Heart right ventricle (tissue), 16 donors: ENCODE measurements at regions of chr13 and their contacts with region 1.

Region 1: DNA sequence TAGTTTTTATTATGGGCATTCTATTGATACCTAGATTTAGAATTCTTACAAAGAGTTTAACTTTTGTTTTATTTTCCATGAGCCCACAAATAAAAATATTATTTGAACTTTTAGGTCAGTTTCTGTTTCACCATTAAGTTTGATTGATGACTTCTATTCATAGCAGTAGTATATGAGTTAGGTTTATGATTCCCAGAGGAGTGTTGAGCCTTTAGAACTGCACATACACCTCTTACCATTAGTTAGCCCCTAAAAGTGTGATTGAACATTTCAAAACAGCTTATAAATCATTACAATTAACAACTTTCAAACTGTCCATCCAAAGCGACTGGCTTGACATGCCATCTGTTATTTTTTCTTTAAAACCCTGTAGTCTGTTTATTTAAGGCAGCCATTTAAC is 19.0 kb upstream of the PCDH17 start:
- DNase-seq: no peak
- ATAC-seq: no peak
- H3K4me3 ChIP-seq: no peak overlapping the region
- H3K27ac ChIP-seq: no peak overlapping the region
- H3K4me1 ChIP-seq: no peaks in the 10 kb centered on the region
- H3K27me3 ChIP-seq: no peaks in the 10 kb centered on the region
- CTCF ChIP-seq: no peak

Region 2: DNA sequence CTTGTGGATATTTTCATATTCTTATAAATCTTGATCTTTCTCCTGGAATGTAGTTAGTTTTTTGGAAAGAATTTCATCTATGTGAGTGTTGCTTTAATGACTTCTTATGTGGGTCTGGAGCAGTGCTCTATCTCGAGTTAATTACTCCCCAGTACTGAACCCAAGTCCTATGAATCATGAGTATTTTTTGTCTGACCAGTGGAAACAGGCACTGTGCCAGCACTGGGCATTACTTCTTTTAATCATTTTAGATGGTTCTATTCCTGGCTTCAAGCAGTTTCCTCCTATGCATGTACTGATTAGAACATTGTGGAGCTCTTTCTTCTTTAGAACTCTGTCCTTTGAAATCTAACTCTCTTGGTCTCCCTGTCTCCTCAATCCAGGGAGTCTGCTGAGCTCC is 485.3 kb after region 1 on chr13:
- intact Hi-C with region 1: loop called in 1 of 10 experiments (anchors 5 kb)
- DNase-seq: no peak
- ATAC-seq: no peak
- H3K4me3 ChIP-seq: no peak overlapping the region
- H3K27ac ChIP-seq: no peak overlapping the region
- H3K4me1 ChIP-seq: no peaks in the 10 kb centered on the region
- H3K27me3 ChIP-seq: no peaks in the 10 kb centered on the region
- CTCF ChIP-seq: no peak